ENCODE measurements at regions of chr18 and their contacts with region 1.

Region 1: GRCh38 chr18:12934454-12935071 is 13.2 kb upstream of the SEH1L start:
- DNase-seq: peak; percentile 57 to 74 (median 73)
- H3K4me3 ChIP-seq: no peak overlapping the region
- H3K4me3 Mint-ChIP-seq: peak overlapping the region; percentile 55 to 88
- H3K27ac ChIP-seq: no peak overlapping the region
- H3K27ac Mint-ChIP-seq: peak overlapping the region in 2 of 7 donors; percentile 4 to 74
- H3K4me1 ChIP-seq: no peaks in the 10 kb centered on the region
- H3K4me1 Mint-ChIP-seq: peaks cover 3% of the 10 kb centered on the region
- H3K27me3 ChIP-seq: no peaks in the 10 kb centered on the region
- H3K27me3 Mint-ChIP-seq: peaks cover 0 to 3% (median 3%) of the 10 kb centered on the region in 3 donors
- CTCF ChIP-seq: peak; percentile 86

Region 2: DNA sequence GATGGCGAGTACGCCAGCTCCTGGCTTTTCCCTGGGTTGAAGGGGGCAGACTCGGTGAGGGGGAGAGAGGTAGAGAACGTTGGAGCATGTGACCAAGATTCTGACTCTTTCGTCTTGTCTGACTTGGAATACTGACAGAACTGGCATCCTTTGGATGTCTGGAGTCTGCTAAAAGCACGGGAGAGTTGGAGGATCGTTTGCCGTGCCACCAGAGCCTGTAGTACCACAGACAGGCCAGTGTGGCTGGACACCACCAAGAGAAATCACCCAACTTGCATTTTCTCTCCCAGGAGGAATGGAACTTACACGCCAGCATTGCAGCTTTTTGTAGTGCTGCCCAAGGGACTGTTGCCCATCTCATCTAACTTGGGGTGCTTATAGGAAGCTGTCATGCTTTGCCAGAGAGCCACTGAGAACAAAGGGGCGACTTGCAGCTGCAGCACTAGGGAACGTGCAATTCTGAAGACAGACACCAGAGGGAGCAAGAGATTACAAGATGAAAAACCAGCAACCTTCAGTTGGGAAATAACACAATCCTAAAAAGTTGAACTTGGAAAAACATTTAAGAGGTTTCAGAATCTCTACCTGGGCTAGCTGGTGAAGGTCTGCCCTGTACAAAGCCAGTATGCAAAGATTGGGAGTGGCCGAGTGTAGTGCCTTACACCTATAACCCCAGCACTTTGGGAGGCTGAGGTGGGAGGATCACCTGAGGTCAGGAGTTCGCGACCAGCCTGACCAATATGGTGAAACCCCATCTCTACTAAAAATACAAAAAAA is 207.6 kb before region 1 on chr18:
- intact Hi-C with region 1: loop called (anchors 1 kb)
- DNase-seq: peak; percentile 49 to 59 (median 57)
- H3K4me3 ChIP-seq: no peak overlapping the region
- H3K4me3 Mint-ChIP-seq: no peak overlapping the region
- H3K27ac ChIP-seq: no peak overlapping the region
- H3K27ac Mint-ChIP-seq: peak overlapping the region in 5 of 7 donors; percentile 27 to 83 (median 61)
- H3K4me1 ChIP-seq: no peaks in the 10 kb centered on the region
- H3K4me1 Mint-ChIP-seq: peaks cover 4% of the 10 kb centered on the region
- H3K27me3 ChIP-seq: no peaks in the 10 kb centered on the region
- H3K27me3 Mint-ChIP-seq: peaks cover 0 to 3% (median 0%) of the 10 kb centered on the region in 3 donors
- CTCF ChIP-seq: peak; percentile 97

Region 3: DNA sequence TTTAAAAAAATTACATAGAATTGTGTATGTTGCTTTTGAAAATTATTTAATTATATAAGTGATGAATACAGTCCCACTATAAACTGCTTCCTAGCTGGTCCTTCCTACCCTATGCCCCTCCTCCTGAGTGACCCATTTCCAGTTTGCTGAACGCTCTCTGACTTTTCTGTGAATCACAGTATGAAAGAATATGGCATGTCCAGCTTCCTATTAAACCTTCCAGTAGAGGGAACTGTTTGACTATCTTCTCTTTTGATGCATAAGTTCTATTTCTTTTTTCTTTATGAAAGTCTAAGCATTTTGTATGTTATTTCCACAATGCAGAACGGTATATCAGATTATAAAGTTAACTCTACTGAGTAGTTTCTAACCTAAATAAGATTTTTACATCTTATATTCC is 190.5 kb before region 1 on chr18:
- intact Hi-C with region 1: loop called in 1 of 2 experiments (anchors 5 kb)
- DNase-seq: peak; percentile 23 to 57 (median 47)
- H3K4me3 ChIP-seq: no peak overlapping the region
- H3K4me3 Mint-ChIP-seq: no peak overlapping the region
- H3K27ac ChIP-seq: no peak overlapping the region
- H3K27ac Mint-ChIP-seq: no peak overlapping the region
- H3K4me1 ChIP-seq: no peaks in the 10 kb centered on the region
- H3K4me1 Mint-ChIP-seq: no peaks in the 10 kb centered on the region
- H3K27me3 ChIP-seq: no peaks in the 10 kb centered on the region
- H3K27me3 Mint-ChIP-seq: peaks cover 0 to 1% (median under 1%) of the 10 kb centered on the region in 3 donors
- CTCF ChIP-seq: peak; percentile 66

Region 4: DNA sequence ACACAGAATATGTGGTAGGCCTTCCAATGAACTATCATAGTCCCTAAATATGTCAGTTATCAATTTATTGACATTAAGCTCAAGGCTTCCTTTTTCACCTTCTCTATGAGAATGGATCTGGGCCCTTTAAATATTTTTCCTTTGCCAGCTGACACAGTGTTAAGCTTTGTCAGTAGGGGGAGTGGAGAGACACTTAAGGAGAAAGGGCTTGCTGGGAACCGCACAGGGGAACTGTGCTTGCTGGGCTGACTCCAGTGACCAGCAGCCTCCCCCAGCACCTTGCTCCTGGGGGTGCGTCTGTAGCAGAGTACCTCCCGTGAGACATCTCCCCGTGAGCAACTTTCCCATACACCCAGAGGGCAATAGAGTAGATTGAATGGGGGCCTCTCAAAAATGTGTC is 44.1 kb before region 1 on chr18:
- intact Hi-C with region 1: loop called in 1 of 2 experiments (anchors 5 kb)
- DNase-seq: no peak
- H3K4me3 ChIP-seq: no peak overlapping the region
- H3K4me3 Mint-ChIP-seq: no peak overlapping the region
- H3K27ac ChIP-seq: no peak overlapping the region
- H3K27ac Mint-ChIP-seq: no peak overlapping the region
- H3K4me1 ChIP-seq: peaks cover 5 to 8% of the 10 kb centered on the region in 2 donors
- H3K4me1 Mint-ChIP-seq: peaks cover 23% of the 10 kb centered on the region
- H3K27me3 ChIP-seq: no peaks in the 10 kb centered on the region
- H3K27me3 Mint-ChIP-seq: peaks cover 0 to 8% (median 2%) of the 10 kb centered on the region in 3 donors
- CTCF ChIP-seq: peak; percentile 18

Region 5: DNA sequence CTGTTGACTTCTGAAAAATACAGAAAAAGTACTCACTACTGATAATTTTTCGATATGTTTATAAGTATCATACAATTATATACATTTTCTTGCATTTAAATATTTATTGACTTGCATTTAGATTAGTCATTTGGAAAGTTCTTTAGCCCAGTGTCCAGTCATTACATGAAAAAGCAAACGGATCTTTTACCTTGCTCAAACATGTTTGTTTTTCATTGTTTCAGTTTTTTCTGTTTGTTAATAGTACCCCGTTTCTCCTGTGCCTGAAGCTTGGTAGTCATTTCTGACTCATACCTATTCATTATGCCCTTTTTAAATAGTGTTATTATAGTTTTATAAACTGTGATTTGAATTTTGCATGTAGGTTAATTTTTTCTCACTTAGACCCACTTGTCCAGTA is 84.7 kb after region 1 on chr18:
- intact Hi-C with region 1: no loop called
- DNase-seq: no peak
- H3K4me3 ChIP-seq: no peak overlapping the region
- H3K4me3 Mint-ChIP-seq: no peak overlapping the region
- H3K27ac ChIP-seq: no peak overlapping the region
- H3K27ac Mint-ChIP-seq: no peak overlapping the region
- H3K4me1 ChIP-seq: no peaks in the 10 kb centered on the region
- H3K4me1 Mint-ChIP-seq: no peaks in the 10 kb centered on the region
- H3K27me3 ChIP-seq: no peaks in the 10 kb centered on the region
- H3K27me3 Mint-ChIP-seq: no peaks in the 10 kb centered on the region
- CTCF ChIP-seq: no peak